Body of pancreas (tissue), 4 donors: ENCODE measurements at regions of chr9 and their contacts with region 1.

Region 1: DNA sequence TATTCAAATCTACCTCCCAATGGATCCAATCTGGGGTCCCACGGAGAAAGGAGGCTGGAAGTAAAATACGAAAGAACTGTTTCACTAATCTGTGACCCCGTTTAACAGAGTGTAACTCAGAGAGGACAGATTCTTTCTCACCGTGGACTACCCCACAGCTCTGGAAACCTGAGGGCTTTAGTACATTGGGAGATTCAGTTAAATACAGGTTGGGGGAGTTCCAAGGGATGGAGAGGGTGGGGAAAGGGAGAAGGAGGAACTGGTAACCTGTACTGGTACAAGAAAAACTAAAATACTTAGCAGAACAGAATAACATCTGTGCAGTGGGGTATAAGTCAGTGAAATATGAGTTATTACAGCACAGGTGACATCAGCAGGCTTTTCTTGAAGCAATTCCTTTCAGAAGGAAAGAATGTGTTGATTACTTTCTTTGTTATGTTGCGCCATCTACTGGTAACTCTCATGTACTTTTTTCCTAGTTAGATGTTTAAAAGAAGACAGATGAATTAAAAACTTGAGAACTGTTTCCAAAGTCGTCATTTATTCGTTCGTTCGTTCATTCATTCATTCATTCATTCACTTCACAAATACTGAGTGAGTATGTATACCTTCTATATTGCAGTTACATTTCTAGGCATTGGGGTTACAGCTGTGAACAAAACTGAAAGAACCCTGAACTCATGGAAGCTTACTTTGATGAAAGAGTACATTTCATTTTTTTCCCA is 30.0 kb upstream of the STOM start:
- DNase-seq: peak in 1 of 4 donors; percentile 13
- ATAC-seq: peak; percentile 91
- H3K4me3 ChIP-seq: no peak overlapping the region
- H3K27ac ChIP-seq: no peak overlapping the region
- H3K4me1 ChIP-seq: no peaks in the 10 kb centered on the region
- H3K27me3 ChIP-seq: no peaks in the 10 kb centered on the region
- CTCF ChIP-seq: peak; percentile 39 to 88 (median 71)
- POLR2A ChIP-seq: no peak

Region 2: GRCh38 chr9:121312166-121312565 is 87.9 kb before region 1 on chr9:
- intact Hi-C with region 1: loop called (anchors 5 kb)
- DNase-seq: no peak
- ATAC-seq: no peak
- H3K4me3 ChIP-seq: no peak overlapping the region
- H3K27ac ChIP-seq: no peak overlapping the region
- H3K4me1 ChIP-seq: peaks cover 3% of the 10 kb centered on the region
- H3K27me3 ChIP-seq: no peaks in the 10 kb centered on the region
- CTCF ChIP-seq: no peak
- POLR2A ChIP-seq: no peak

Region 3: DNA sequence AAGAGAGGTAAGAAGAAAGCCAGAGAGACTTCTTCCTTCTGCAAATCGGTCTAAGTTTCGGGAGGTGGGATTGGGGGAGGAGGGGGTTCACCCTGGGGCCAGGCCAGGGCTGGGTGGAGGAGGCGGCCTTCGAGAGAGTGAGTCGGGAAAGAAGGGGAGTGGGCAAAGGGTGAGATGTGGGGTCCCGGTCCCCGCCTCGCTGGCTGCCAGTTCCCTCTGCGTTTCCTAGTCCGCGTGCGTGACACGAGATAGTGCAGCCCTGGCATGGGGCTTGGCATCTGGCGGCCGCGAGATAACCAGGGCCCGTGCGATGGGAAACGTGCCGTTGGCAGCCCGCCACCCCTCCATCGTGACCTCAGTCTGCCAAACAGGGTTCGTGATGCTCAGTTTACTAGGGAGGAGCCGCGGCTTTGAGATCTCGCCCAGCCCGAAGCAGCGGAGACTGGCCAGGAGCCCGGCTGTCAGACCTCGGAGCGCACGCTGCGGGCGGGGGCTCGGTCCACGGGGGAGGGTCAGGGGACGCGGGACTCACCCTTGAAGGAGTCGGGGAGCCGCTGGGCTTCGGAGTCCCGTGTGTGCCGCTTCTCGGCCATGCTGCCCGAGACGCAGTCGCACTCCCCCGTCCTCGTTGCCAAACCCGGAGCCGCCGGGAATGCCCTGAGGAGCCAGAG is 30.3 kb before region 1 on chr9 and contains the start of gene STOM:
- intact Hi-C with region 1: no loop called
- DNase-seq: peak; percentile 78 to 85 (median 82)
- ATAC-seq: peak; percentile 68
- H3K4me3 ChIP-seq: peak within 1 kb of the TSS in 1 of 2 donors; percentile 16
- H3K27ac ChIP-seq: peak within 1 kb of the TSS; percentile 46 to 81 (median 78)
- H3K4me1 ChIP-seq: peaks cover 44% of the 10 kb centered on the region
- H3K27me3 ChIP-seq: no peaks in the 10 kb centered on the region
- CTCF ChIP-seq: no peak
- POLR2A ChIP-seq: peak; percentile 76 to 95 (median 89)
- total RNA-seq, gene STOM: 59.9 to 70.5 TPM